HEK293 (cell line): ENCODE measurements at regions of chr1 and their contacts with region 1.

Region 1: GRCh38 chr1:203702130-203702577 is 62.8 kb upstream of the LAX1 start:
- H3K4me3 ChIP-seq: no peak overlapping the region
- H3K27ac ChIP-seq: no peak overlapping the region
- H3K4me1 ChIP-seq: no peaks in the 10 kb centered on the region
- CTCF ChIP-seq: peak; percentile 85

Region 2: GRCh38 chr1:203486618-203487370 is 215.4 kb before region 1 on chr1:
- CTCF ChIA-PET with region 1: interaction called, 16 read pairs
- POLR2A ChIA-PET with region 1: no interaction called
- H3K4me3 ChIP-seq: no peak overlapping the region
- H3K27ac ChIP-seq: peak overlapping the region; percentile 10; the same call in 1 of the 2 replicates
- H3K4me1 ChIP-seq: no peaks in the 10 kb centered on the region
- CTCF ChIP-seq: no peak

Region 3: GRCh38 chr1:203625628-203626019 is 76.5 kb before region 1 on chr1:
- CTCF ChIA-PET with region 1: interaction called, 41 read pairs
- POLR2A ChIA-PET with region 1: interaction called, 3 read pairs
- H3K4me3 ChIP-seq: no peak overlapping the region
- H3K27ac ChIP-seq: no peak overlapping the region; the same call in 1 of the 2 replicates
- H3K4me1 ChIP-seq: peaks cover 6% of the 10 kb centered on the region; the same call in 1 of the 2 replicates
- CTCF ChIP-seq: peak; percentile 87

Region 4: GRCh38 chr1:203638950-203639349 is 63.2 kb before region 1 on chr1:
- CTCF ChIA-PET with region 1: interaction called, 15 read pairs
- POLR2A ChIA-PET with region 1: no interaction called
- H3K4me3 ChIP-seq: no peak overlapping the region
- H3K27ac ChIP-seq: no peak overlapping the region
- H3K4me1 ChIP-seq: no peaks in the 10 kb centered on the region
- CTCF ChIP-seq: no peak

Region 5: GRCh38 chr1:203720262-203720661 is 18.1 kb after region 1 on chr1:
- CTCF ChIA-PET with region 1: interaction called, 15 read pairs
- POLR2A ChIA-PET with region 1: no interaction called
- H3K4me3 ChIP-seq: no peak overlapping the region
- H3K27ac ChIP-seq: no peak overlapping the region
- H3K4me1 ChIP-seq: no peaks in the 10 kb centered on the region
- CTCF ChIP-seq: no peak

Region 6: DNA sequence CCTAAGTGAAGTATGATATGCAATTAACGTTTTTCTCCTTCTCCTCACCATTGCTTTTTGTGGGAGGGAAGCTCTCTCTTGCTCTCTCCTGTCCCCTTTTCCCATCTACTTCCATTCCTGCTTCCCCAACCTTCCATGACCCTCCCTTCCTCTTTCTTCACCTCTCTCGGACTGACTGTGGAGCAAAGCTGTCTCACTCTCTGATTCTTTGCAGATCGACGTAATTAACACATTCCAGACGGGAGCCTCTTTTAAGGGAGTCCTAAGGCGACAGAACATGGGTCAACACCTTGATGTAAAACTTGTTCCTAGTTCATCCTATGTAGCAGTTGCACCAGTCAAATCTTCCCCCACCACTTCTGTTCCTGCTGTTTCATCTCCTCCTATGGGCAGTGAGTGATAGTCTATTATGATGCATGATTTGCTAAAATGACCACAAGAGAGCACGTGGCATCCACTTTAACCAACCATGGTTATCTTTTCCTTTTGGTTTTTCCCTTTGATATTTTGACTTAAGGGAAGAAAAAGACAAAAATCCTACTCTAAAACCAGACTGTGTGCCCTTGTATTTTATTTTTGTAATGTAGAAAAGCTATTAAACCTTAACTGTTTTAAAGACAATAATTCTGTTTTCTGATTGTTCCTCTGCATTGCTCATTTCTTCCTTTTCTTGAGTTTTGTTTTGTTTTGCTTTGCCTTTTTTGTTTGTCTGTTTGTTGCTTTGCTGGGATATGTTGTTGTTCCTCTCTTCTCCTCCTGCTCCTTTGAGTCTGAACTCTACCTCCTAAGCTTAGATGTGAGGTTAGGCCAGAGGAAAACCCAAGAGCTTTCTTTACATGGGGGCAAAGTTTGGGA is 31.1 kb after region 1 on chr1:
- CTCF ChIA-PET with region 1: no interaction called
- POLR2A ChIA-PET with region 1: no interaction called
- H3K4me3 ChIP-seq: no peak overlapping the region
- H3K27ac ChIP-seq: no peak overlapping the region
- H3K4me1 ChIP-seq: no peaks in the 10 kb centered on the region
- CTCF ChIP-seq: no peak